ENCODE measurements at regions of chr7 and their contacts with region 1.

Region 1: GRCh38 chr7:76314042-76314721 is 11.7 kb downstream of the HSPB1 start:
- DNase-seq: peak; percentile 93 to 98 (median 96)
- ATAC-seq: peak; percentile 69
- H3K4me3 ChIP-seq: no peak overlapping the region
- H3K4me3 Mint-ChIP-seq: peak overlapping the region; percentile 5
- H3K27ac ChIP-seq: no peak overlapping the region
- H3K27ac Mint-ChIP-seq: no peak overlapping the region
- H3K4me1 ChIP-seq: peaks cover 20% of the 10 kb centered on the region
- H3K4me1 Mint-ChIP-seq: peaks cover 20% of the 10 kb centered on the region
- H3K27me3 ChIP-seq: no peaks in the 10 kb centered on the region
- H3K27me3 Mint-ChIP-seq: no peaks in the 10 kb centered on the region
- CTCF ChIP-seq: peak; percentile 99

Region 2: DNA sequence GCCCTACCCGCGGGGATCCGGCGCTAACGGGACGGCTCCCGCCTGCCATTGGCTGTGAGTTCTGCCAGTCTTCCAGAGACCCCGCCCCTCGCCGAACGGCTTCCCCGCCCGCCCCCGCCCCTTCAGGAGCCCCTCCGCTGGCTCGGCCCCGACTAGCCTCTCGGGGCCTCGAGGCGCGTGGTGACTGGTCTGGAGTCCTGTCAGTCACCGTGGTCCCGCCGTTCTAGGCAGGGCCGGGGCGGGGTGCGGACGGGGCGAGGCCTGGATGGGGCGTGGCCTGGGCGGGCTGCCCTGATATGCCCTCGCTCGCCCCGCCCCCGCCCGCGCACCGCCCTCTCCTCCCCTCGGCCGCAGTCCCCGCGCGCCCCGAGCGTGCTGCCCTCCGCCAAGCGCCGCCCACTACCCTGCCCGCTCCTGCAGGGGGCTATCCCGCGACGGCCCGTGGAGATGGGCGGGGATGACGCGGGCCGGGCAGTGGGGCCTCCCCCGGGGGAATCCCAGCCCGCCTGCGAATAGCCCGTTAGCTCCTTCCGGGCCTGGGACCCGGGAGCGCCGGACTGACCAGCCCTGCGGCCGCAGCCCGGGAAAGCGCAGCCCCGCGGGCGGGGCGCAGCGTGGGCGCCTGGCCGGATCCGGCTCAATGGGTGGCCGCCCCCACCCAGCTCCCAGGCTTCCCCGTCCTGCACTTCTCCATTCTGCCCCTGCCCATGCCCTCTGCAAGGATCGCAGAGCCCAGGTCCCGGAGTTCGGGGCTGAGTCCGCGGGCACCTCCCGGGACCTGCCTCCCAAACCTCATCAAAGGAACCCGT is 575.0 kb before region 1 on chr7:
- CTCF ChIA-PET with region 1: no interaction called
- POLR2A ChIA-PET with region 1: no interaction called
- intact Hi-C with region 1: loop called in 1 of 2 experiments (anchors 2 kb)
- DNase-seq: peak; percentile 99 to 100 (median 99)
- ATAC-seq: peak; percentile 92
- H3K4me3 ChIP-seq: peak overlapping the region; percentile 85 to 92
- H3K4me3 Mint-ChIP-seq: peak overlapping the region; percentile 99
- H3K27ac ChIP-seq: peak overlapping the region; percentile 71
- H3K27ac Mint-ChIP-seq: peak overlapping the region; percentile 98
- H3K4me1 ChIP-seq: peaks cover 13% of the 10 kb centered on the region
- H3K4me1 Mint-ChIP-seq: peaks cover 15% of the 10 kb centered on the region
- H3K27me3 ChIP-seq: peaks cover 0 to 4% of the 10 kb centered on the region in 2 experiments
- H3K27me3 Mint-ChIP-seq: no peaks in the 10 kb centered on the region
- CTCF ChIP-seq: no peak

Region 3: DNA sequence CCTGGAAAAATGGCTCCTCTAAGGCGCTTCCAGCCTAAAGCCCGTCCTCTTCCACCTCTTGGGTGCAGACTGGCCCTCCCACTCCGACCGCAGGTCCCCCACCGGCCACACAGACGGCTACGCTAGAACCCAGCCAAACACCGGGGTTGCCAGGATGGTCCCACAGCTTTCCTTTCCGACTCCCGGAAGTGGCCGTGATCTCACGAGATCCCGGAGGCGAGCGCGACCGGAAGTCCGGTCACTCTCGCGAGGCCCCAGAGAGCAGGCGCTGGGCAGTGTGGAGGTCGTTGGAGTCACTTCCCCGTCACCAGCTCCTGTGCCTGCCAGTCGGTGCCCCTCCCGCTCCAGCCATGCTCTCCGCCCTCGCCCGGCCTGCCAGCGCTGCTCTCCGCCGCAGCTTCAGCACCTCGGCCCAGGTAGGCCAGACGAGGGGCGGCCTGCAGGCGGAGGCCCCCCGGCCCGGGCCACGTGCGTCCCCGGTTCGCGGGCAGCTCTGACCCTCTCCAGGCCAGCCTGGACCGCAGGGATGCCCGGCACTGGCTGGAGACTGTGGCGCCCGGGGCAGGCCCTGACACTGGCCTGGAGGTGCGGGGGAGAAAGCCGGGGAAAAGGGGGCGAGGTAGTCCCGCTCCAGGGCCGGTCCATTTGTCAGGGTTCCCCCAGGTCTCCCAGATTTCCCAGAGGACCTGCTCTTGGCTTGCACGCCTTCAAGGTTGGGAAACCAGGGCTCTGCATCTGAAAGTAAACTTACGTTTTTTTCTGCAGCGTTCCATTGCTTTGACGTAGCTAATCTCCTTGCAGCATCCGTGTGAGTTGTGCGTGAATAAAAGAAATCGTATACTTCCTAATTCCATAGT is 266.1 kb before region 1 on chr7 and contains the starts of genes MDH2 and STYXL1:
- CTCF ChIA-PET with region 1: no interaction called
- POLR2A ChIA-PET with region 1: no interaction called
- intact Hi-C with region 1: loop called in 1 of 2 experiments (anchors 2 kb)
- DNase-seq: peak; percentile 72 to 95 (median 86)
- ATAC-seq: peak; percentile 82
- H3K4me3 ChIP-seq: peak within 1 kb of the TSS; percentile 84 to 95
- H3K4me3 Mint-ChIP-seq: peak within 1 kb of the TSS; percentile 99
- H3K27ac ChIP-seq: peak within 1 kb of the TSS; percentile 87
- H3K27ac Mint-ChIP-seq: peak within 1 kb of the TSS; percentile 98
- H3K4me1 ChIP-seq: peaks cover 16% of the 10 kb centered on the region
- H3K4me1 Mint-ChIP-seq: peaks cover 59% of the 10 kb centered on the region
- H3K27me3 ChIP-seq: no peaks in the 10 kb centered on the region
- H3K27me3 Mint-ChIP-seq: no peaks in the 10 kb centered on the region
- CTCF ChIP-seq: no peak
- total RNA-seq, gene MDH2: 73.0 to 74.7 TPM
- total RNA-seq, gene STYXL1: 4.2 to 6.4 TPM

Region 4: GRCh38 chr7:76179686-76180085 is 134.5 kb before region 1 on chr7:
- CTCF ChIA-PET with region 1: interaction called, 98 read pairs
- POLR2A ChIA-PET with region 1: interaction called, 7 read pairs
- intact Hi-C with region 1: loop called (anchors 1 kb)
- DNase-seq: no peak
- ATAC-seq: no peak
- H3K4me3 ChIP-seq: no peak overlapping the region
- H3K4me3 Mint-ChIP-seq: no peak overlapping the region
- H3K27ac ChIP-seq: no peak overlapping the region
- H3K27ac Mint-ChIP-seq: no peak overlapping the region
- H3K4me1 ChIP-seq: no peaks in the 10 kb centered on the region
- H3K4me1 Mint-ChIP-seq: peaks cover 3% of the 10 kb centered on the region
- H3K27me3 ChIP-seq: no peaks in the 10 kb centered on the region
- H3K27me3 Mint-ChIP-seq: peaks cover 4% of the 10 kb centered on the region
- CTCF ChIP-seq: no peak

Region 5: GRCh38 chr7:76291343-76292212 is 22.6 kb before region 1 on chr7:
- CTCF ChIA-PET with region 1: interaction called, 234 read pairs
- POLR2A ChIA-PET with region 1: interaction called, 4 read pairs
- intact Hi-C with region 1: loop called (anchors 1 kb)
- DNase-seq: peak; percentile 66 to 91 (median 86)
- ATAC-seq: peak; percentile 95
- H3K4me3 ChIP-seq: no peak overlapping the region
- H3K4me3 Mint-ChIP-seq: no peak overlapping the region
- H3K27ac ChIP-seq: no peak overlapping the region
- H3K27ac Mint-ChIP-seq: no peak overlapping the region
- H3K4me1 ChIP-seq: no peaks in the 10 kb centered on the region
- H3K4me1 Mint-ChIP-seq: peaks cover 6% of the 10 kb centered on the region
- H3K27me3 ChIP-seq: no peaks in the 10 kb centered on the region
- H3K27me3 Mint-ChIP-seq: no peaks in the 10 kb centered on the region
- CTCF ChIP-seq: peak; percentile 93

Region 6: GRCh38 chr7:76327610-76328009 is 13.4 kb after region 1 on chr7:
- CTCF ChIA-PET with region 1: interaction called, 11 read pairs
- POLR2A ChIA-PET with region 1: interaction called, 11 read pairs
- intact Hi-C with region 1: no loop called
- DNase-seq: peak in 1 of 9 experiments; percentile 22
- ATAC-seq: no peak
- H3K4me3 ChIP-seq: no peak overlapping the region
- H3K4me3 Mint-ChIP-seq: no peak overlapping the region
- H3K27ac ChIP-seq: no peak overlapping the region
- H3K27ac Mint-ChIP-seq: no peak overlapping the region
- H3K4me1 ChIP-seq: peaks cover 11% of the 10 kb centered on the region
- H3K4me1 Mint-ChIP-seq: peaks cover 33% of the 10 kb centered on the region
- H3K27me3 ChIP-seq: no peaks in the 10 kb centered on the region
- H3K27me3 Mint-ChIP-seq: no peaks in the 10 kb centered on the region
- CTCF ChIP-seq: no peak

Region 7: GRCh38 chr7:76393116-76394031 is 79.2 kb after region 1 on chr7:
- CTCF ChIA-PET with region 1: no interaction called
- POLR2A ChIA-PET with region 1: interaction called, 5 read pairs
- intact Hi-C with region 1: loop called (anchors 1 to 2 kb)
- DNase-seq: peak; percentile 77 to 95 (median 90)
- ATAC-seq: peak; percentile 83
- H3K4me3 ChIP-seq: peak overlapping the region; percentile 64 to 85
- H3K4me3 Mint-ChIP-seq: peak overlapping the region; percentile 86
- H3K27ac ChIP-seq: peak overlapping the region; percentile 69 to 70
- H3K27ac Mint-ChIP-seq: peak overlapping the region; percentile 82
- H3K4me1 ChIP-seq: peaks cover 20% of the 10 kb centered on the region
- H3K4me1 Mint-ChIP-seq: peaks cover 17% of the 10 kb centered on the region
- H3K27me3 ChIP-seq: no peaks in the 10 kb centered on the region
- H3K27me3 Mint-ChIP-seq: no peaks in the 10 kb centered on the region
- CTCF ChIP-seq: no peak

Measured in CD8-positive, alpha-beta T cell (primary cell).